ENCODE measurements at regions of chr19 and their contacts with region 1.

Region 1: GRCh38 chr19:18521885-18522624 is at the start of gene ELL:
- DNase-seq: peak; percentile 100
- H3K4me3 Mint-ChIP-seq: peak within 1 kb of the TSS; percentile 93
- H3K27ac Mint-ChIP-seq: peak within 1 kb of the TSS; percentile 87
- H3K4me1 Mint-ChIP-seq: peaks cover 18% of the 10 kb centered on the region
- H3K27me3 Mint-ChIP-seq: no peaks in the 10 kb centered on the region
- total RNA-seq, gene ELL: 26.2 to 26.3 TPM

Region 2: DNA sequence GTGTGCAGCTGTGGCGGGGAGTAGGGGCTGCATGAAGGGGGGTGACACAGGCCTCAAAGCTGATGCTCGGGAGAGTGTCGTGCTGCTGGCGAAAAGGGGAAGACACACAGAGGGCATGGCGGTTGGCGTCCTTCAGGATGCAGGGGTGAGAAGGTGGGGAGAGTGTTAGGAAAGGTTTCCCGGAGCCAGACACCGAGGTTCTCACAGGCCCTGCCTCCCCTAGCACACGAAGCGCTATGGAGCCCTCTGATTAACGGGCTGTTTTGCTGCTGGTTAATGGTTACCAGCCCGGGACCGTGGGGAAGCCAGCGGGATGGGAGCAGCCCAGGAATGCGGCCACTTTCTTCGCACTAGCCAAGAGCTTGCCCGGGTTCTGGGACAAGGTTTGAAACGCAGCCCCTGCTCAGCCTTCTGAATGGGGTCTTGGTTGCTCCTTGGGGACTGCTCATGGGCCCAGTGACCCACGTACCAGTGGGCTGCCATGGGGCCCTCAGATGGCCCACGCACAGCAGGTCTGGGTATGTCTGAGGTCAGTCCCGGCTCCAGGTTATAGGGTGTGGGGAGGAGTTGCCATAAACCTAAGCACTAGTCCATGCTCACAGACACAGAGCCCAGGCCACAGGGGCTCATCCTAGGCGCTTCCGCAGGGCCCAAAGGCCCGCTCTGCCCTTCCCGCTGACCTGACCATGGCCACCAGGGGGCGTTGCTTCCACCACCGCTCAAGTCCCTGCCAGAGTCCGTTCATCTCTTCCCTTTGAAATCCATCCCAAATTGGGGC is 52.8 kb before region 1 on chr19:
- CTCF ChIA-PET with region 1: interaction called, 39 read pairs
- POLR2A ChIA-PET with region 1: interaction called, 5 read pairs
- DNase-seq: peak; percentile 68
- H3K4me3 Mint-ChIP-seq: no peak overlapping the region
- H3K27ac Mint-ChIP-seq: no peak overlapping the region
- H3K4me1 Mint-ChIP-seq: peaks cover 26% of the 10 kb centered on the region
- H3K27me3 Mint-ChIP-seq: no peaks in the 10 kb centered on the region

Region 3: GRCh38 chr19:18496167-18496979 is 25.7 kb before region 1 on chr19:
- CTCF ChIA-PET with region 1: interaction called, 29 read pairs
- POLR2A ChIA-PET with region 1: interaction called, 17 read pairs
- DNase-seq: peak; percentile 75
- H3K4me3 Mint-ChIP-seq: peak overlapping the region; percentile 52
- H3K27ac Mint-ChIP-seq: peak overlapping the region; percentile 88
- H3K4me1 Mint-ChIP-seq: peaks cover 84% of the 10 kb centered on the region
- H3K27me3 Mint-ChIP-seq: no peaks in the 10 kb centered on the region

Region 4: DNA sequence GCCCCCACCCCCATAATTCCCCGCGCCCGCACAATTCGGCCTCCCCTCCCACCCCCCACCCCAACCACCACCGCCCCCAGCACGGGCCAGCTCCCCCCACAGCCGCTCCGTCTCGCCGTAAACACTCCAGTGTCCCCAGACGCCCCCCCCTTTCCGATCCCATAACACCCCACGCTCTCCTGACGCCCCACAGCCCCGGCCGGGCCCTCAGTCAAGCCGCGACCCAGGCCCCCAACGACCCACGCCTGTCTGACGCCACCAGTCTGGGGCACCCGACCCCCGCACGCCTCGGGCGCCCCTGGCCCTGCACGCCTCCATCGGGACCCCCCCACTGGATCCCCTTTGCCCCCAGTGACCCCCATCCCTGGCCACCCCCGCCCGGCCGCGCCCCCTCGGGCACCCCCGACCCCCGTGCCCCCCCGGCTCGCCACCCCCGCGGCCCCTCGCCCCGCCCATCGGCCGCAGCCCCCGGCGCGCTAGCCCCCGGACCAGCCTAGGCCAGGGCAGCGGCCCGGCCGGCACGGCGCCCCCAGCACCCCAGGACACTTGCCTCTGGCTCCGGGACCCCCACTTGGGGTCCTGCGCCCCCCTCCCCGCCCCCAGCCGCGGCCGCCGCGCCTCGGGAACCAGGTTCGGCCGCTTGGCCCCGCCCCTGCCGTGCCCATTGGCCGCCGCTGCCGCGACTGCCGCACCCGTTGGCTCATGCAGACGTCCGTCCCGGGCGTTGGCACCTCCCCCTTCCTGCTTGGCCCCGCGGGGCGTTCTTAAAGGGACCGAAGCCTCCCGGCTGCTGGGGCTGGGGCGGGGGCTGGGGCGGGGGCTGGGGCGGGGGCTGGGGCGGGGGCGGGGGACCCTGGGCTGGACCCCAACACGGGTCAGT is 21.1 kb after region 1 on chr19 and contains the start of gene FKBP8:
- CTCF ChIA-PET with region 1: interaction called, 3 read pairs
- POLR2A ChIA-PET with region 1: interaction called, 21 read pairs
- DNase-seq: peak; percentile 96
- H3K4me3 Mint-ChIP-seq: peak within 1 kb of the TSS; percentile 95
- H3K27ac Mint-ChIP-seq: peak within 1 kb of the TSS; percentile 98
- H3K4me1 Mint-ChIP-seq: peaks cover 31% of the 10 kb centered on the region
- H3K27me3 Mint-ChIP-seq: no peaks in the 10 kb centered on the region
- total RNA-seq, gene FKBP8: 263 TPM

Region 5: GRCh38 chr19:18571564-18572300 is 49.7 kb after region 1 on chr19 and contains the start of gene UBA52:
- CTCF ChIA-PET with region 1: interaction called, 53 read pairs
- POLR2A ChIA-PET with region 1: interaction called, 58 read pairs
- DNase-seq: peak; percentile 99
- H3K4me3 Mint-ChIP-seq: peak within 1 kb of the TSS; percentile 91
- H3K27ac Mint-ChIP-seq: peak within 1 kb of the TSS; percentile 90
- H3K4me1 Mint-ChIP-seq: peaks cover 35% of the 10 kb centered on the region
- H3K27me3 Mint-ChIP-seq: no peaks in the 10 kb centered on the region
- total RNA-seq, gene UBA52: 1,374 to 1,409 TPM

Region 6: GRCh38 chr19:18629166-18630088 is 107.4 kb after region 1 on chr19:
- CTCF ChIA-PET with region 1: no interaction called
- POLR2A ChIA-PET with region 1: no interaction called
- DNase-seq: no peak
- H3K4me3 Mint-ChIP-seq: no peak overlapping the region
- H3K27ac Mint-ChIP-seq: no peak overlapping the region
- H3K4me1 Mint-ChIP-seq: no peaks in the 10 kb centered on the region
- H3K27me3 Mint-ChIP-seq: peaks cover 10% of the 10 kb centered on the region

Region 7: GRCh38 chr19:18742838-18743783 is 221.1 kb after region 1 on chr19:
- CTCF ChIA-PET with region 1: no interaction called
- POLR2A ChIA-PET with region 1: no interaction called
- DNase-seq: no peak
- H3K4me3 Mint-ChIP-seq: no peak overlapping the region
- H3K27ac Mint-ChIP-seq: no peak overlapping the region
- H3K4me1 Mint-ChIP-seq: no peaks in the 10 kb centered on the region
- H3K27me3 Mint-ChIP-seq: no peaks in the 10 kb centered on the region

Region 8: DNA sequence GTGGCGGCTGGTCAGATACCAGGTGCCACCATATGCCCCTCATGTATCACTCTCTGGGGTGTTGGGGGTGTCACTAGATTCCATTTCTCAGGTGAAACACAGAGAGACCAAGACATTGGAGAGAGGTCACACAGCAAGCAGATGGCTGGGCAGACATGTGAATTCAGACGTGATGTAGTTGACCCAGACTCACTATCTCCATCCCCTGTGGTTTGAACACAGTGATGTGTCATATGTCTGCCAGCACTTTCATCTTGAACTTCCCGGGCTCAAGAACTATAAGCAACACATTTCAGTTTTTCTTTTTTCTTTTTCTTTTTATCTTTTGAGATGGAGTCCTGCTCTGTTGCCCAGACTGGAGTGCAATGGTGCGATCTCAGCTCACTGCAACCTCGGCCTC is 293.6 kb after region 1 on chr19:
- CTCF ChIA-PET with region 1: no interaction called
- POLR2A ChIA-PET with region 1: no interaction called
- DNase-seq: no peak
- H3K4me3 Mint-ChIP-seq: no peak overlapping the region
- H3K27ac Mint-ChIP-seq: no peak overlapping the region
- H3K4me1 Mint-ChIP-seq: no peaks in the 10 kb centered on the region
- H3K27me3 Mint-ChIP-seq: peaks cover 4% of the 10 kb centered on the region

Measured in activated CD4-positive, alpha-beta memory T cell treated with anti-CD3 and anti-CD28 coated beads, Interleukin-2, amount 10 ng/mL, durations not matched to agents 7 days and 5 days (primary cell).